B cell (primary cell): ENCODE measurements at regions of chr13 and their contacts with region 1.

Region 1: DNA sequence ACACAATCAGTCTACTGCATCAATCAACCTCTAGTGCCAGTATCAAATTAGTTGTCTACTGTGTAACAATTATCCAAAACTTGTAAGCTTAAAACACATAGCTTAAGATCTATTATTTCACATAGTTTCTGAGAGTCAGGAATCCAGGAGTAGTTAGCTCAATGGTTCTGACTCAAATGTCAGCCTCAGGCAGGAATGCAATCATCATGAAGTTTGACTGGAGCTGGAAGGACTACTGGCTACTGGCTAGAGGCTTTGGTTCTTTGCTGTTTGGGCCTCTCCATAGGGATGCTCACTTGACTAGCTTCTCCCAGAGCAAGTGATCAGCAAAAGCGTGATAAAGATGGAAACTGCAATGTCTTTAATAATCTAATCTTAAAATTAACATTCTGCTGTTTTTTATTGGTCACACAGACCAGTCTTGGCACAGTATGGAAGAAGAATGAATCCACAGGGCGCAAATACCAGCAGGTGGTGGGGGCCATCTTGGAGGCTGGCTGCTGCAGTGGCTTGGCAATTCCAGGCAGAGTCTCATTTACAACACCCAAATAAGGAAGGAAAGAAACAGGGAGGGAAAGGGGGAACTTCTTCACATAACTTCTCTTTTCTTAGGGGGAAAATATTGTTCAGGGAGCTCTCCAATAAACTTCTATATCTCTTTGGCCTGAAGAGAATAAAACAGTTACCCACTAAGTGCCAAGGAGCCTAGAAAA is 15.7 kb downstream of the CAB39L start:
- DNase-seq: no peak
- ATAC-seq: no peak
- H3K4me3 ChIP-seq: no peak overlapping the region
- H3K4me3 Mint-ChIP-seq: no peak overlapping the region
- H3K27ac ChIP-seq: no peak overlapping the region
- H3K27ac Mint-ChIP-seq: no peak overlapping the region
- H3K4me1 ChIP-seq: no peaks in the 10 kb centered on the region
- H3K4me1 Mint-ChIP-seq: no peaks in the 10 kb centered on the region
- H3K27me3 ChIP-seq: no peaks in the 10 kb centered on the region
- H3K27me3 Mint-ChIP-seq: no peaks in the 10 kb centered on the region
- CTCF ChIP-seq: no peak

Region 2: DNA sequence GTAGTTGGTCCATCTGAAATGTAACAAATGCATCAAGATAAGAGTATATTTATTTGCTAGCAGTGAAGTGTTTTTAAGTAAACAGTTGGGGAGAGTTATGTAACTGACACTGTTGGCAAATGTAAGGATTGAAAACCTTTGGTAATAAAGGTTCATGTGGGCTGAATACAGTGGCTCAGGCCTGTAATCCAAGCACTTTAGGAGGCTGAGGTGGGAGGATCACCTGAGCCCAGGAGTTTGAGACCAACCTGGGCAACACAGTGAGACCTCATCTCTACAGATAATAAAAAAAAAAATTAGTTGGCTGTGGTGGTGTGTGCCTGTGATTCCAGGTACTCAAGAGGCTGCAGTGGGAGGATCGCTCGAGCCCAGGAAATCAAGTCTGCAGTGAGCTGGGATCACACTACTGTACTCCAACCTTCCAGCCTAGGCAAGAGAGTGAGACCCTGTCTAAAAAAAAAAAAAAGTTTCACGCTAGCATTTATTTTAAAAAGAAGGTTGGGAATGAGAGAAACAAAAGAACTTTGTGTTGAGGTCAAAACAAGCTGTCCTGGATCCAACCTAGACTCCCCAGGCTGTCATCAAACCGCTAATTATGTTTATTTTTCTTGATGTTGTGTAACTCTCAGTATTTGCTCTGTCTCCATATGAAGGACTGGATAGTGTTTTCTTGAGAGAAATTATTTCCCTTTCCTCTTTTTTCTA is 36.6 kb after region 1 on chr13:
- CTCF ChIA-PET with region 1: no interaction called
- POLR2A ChIA-PET with region 1: no interaction called
- intact Hi-C with region 1: loop called (anchors 5 kb)
- DNase-seq: no peak
- ATAC-seq: no peak
- H3K4me3 ChIP-seq: no peak overlapping the region
- H3K4me3 Mint-ChIP-seq: no peak overlapping the region
- H3K27ac ChIP-seq: no peak overlapping the region
- H3K27ac Mint-ChIP-seq: no peak overlapping the region
- H3K4me1 ChIP-seq: no peaks in the 10 kb centered on the region
- H3K4me1 Mint-ChIP-seq: no peaks in the 10 kb centered on the region
- H3K27me3 ChIP-seq: no peaks in the 10 kb centered on the region
- H3K27me3 Mint-ChIP-seq: no peaks in the 10 kb centered on the region
- CTCF ChIP-seq: no peak